Heart right ventricle (tissue), 16 donors: ENCODE measurements at regions of chr7 and their contacts with region 1.

Region 1: GRCh38 chr7:34823640-34824258 is 165.7 kb downstream of the NPSR1 start:
- DNase-seq: peak; percentile 15 to 20
- ATAC-seq: peak in 3 of 8 donors; percentile 46 to 47 (median 47)
- H3K4me3 ChIP-seq: no peak overlapping the region
- H3K27ac ChIP-seq: no peak overlapping the region
- H3K4me1 ChIP-seq: no peaks in the 10 kb centered on the region
- H3K27me3 ChIP-seq: peaks cover 0 to 4% (median 0%) of the 10 kb centered on the region in 7 donors
- CTCF ChIP-seq: peak; percentile 65 to 86 (median 85)

Region 2: DNA sequence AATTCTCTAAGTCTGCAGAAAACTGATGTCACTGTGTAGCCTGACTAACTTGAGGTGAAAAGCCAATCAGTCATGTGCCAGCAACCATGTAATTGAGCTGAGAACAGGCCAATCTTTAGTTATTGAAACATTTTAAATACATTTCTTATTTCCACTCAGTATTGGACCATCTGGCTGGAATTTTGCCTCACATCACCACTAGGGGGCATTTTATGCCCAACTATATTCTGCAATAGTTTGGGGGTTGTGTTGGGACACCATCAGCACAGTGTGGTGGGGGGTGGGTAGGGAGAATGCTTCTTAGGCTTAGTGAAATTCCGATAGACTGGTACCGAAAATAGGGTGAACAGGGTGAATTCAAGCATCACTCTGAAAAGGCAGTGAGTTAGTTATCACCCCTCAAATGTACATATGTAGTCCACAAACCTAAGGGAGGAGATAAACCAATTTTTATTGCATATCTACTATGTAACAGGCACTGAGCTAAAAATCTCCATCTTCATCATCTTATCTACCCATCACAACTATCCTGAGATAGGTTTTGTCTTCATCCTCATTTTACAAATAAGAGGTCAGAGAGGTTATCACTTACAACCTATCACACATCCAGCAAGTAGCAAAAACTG is 147.9 kb before region 1 on chr7:
- intact Hi-C with region 1: loop called in 1 of 10 experiments (anchors 5 kb)
- DNase-seq: no peak
- ATAC-seq: peak in 3 of 8 donors; percentile 41 to 58 (median 56)
- H3K4me3 ChIP-seq: no peak overlapping the region
- H3K27ac ChIP-seq: no peak overlapping the region
- H3K4me1 ChIP-seq: no peaks in the 10 kb centered on the region
- H3K27me3 ChIP-seq: no peaks in the 10 kb centered on the region
- CTCF ChIP-seq: peak; percentile 23 to 61 (median 55)

Region 3: GRCh38 chr7:34687529-34687928 is 136.2 kb before region 1 on chr7:
- intact Hi-C with region 1: no loop called
- DNase-seq: no peak
- ATAC-seq: no peak
- H3K4me3 ChIP-seq: no peak overlapping the region
- H3K27ac ChIP-seq: no peak overlapping the region
- H3K4me1 ChIP-seq: no peaks in the 10 kb centered on the region
- H3K27me3 ChIP-seq: no peaks in the 10 kb centered on the region
- CTCF ChIP-seq: no peak

Region 4: GRCh38 chr7:34966504-34967174 is 142.9 kb after region 1 on chr7:
- intact Hi-C with region 1: no loop called
- DNase-seq: no peak
- ATAC-seq: no peak
- H3K4me3 ChIP-seq: no peak overlapping the region
- H3K27ac ChIP-seq: no peak overlapping the region
- H3K4me1 ChIP-seq: no peaks in the 10 kb centered on the region
- H3K27me3 ChIP-seq: no peaks in the 10 kb centered on the region
- CTCF ChIP-seq: no peak

Region 5: DNA sequence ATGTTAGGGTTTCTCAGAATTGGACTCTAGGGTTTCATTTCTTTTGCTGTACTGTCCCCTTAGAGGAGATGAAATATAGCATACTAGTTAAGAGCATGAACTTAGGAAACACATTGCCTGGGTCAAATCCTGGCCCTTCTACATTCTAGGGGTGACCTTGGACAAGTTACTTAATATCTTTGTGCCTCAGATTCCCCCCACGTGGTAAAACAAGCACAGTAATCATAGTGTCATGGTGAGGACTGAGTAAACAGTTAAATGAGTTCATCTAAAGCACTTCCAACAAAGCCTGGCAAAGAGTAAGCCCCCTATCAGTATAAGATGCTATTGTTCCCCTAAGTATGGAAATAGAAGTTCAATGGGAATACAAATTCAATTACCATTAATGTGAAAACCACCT is 208.4 kb after region 1 on chr7:
- intact Hi-C with region 1: loop called in 8 of 10 experiments (anchors 5 to 10 kb)
- DNase-seq: no peak
- ATAC-seq: no peak
- H3K4me3 ChIP-seq: no peak overlapping the region
- H3K27ac ChIP-seq: no peak overlapping the region
- H3K4me1 ChIP-seq: peaks cover 0 to 28% (median 18%) of the 10 kb centered on the region in 9 donors
- H3K27me3 ChIP-seq: no peaks in the 10 kb centered on the region
- CTCF ChIP-seq: no peak

Region 6: DNA sequence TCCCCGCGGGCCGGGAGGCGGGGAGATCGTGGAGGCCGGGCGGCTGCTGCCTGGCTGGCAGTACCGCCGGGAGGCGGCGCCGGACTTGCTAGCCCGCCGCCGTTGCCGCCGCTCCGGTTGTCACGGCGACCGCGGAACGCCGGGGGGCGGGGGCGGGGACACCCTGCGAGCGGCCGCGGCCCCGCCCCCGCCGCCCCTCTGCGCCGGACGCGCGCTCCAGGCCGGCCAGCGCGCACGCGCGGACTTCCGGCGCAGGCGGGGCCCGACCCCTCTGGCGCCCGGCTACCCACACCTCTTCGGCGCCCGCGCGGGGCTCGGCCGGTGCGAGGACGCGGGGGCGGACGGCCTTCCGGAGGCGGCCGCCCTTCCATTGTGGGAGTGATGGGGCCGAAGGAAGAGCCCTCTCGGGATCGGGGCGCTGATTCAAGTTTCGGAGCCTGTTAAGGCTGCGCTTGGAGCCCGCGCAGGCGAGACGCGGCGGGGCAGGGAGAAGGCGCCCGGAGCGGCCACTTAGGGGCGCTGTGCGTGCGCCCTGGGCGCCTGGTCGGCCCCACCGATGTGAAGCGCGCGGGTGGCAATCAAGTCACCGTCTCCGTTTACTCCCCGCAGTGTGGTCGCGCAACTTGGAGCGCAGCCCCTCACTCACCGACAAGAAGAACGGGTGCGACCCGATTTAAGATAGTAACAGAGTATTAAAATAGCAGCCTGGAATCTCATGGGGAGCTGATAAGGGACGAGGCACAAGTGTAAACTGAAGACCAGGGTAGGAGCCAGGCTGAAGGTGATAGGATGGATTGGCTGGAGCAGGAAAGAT is 214.0 kb after region 1 on chr7:
- intact Hi-C with region 1: loop called in 8 of 10 experiments (anchors 5 to 10 kb)
- DNase-seq: peak; percentile 91 to 96
- ATAC-seq: peak; percentile 85 to 94 (median 90)
- H3K4me3 ChIP-seq: peak overlapping the region; percentile 23 to 86 (median 68)
- H3K27ac ChIP-seq: peak overlapping the region; percentile 70 to 93 (median 89)
- H3K4me1 ChIP-seq: peaks cover 0 to 34% (median 24%) of the 10 kb centered on the region in 9 donors
- H3K27me3 ChIP-seq: no peaks in the 10 kb centered on the region
- CTCF ChIP-seq: peak; percentile 73 to 97 (median 83)

Region 7: DNA sequence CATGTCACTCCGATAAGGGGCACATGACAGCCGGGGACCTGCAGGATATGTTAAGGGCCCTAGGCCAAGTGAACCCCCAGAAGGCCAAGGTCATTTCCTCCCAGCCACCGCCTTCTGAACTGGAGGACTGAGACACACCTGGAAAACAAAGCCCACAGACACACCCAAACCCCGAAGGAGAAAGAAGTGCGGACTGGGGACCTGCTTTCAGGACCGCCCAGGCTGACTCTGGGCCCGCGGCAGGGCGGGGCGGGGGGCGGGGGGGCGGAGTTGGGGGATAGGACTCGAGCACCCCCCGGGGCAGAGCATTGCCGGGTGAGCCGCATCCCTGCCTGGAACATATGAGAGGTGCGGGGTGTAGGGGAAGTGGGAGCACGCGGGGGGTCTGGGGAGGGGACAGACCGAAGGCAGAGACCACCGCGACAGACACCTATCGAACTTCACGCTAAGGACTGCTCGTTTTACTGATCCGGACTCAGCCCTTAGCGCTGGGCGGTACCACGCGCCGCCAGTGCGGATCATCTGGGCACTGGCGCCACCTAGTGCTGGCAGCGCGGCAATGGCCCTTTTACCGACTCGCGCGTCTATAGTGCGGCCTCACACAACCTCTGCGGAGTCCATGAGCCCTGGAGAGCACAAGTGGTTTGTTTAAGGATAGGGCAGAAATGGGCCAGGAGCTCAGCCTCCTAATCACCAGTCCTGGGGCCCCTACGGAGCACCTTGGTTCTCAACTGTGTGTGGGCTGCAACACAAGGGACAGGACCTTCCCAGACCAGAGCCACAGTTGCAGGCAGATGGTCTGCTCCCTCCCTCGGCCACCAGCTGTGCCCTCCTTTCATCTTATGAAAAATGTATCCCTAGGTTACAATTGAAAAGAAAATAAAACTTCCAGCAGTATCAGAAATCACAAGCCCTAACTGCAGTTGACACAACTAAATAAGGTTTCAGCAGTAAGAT is 713.6 kb after region 1 on chr7:
- intact Hi-C with region 1: loop called in 1 of 10 experiments (anchors 10 kb)
- DNase-seq: peak; percentile 75 to 84
- ATAC-seq: peak; percentile 96 to 98 (median 97)
- H3K4me3 ChIP-seq: peak overlapping the region in 9 of 10 donors; percentile 33 to 55 (median 51)
- H3K27ac ChIP-seq: no peak overlapping the region
- H3K4me1 ChIP-seq: peaks cover 0 to 12% (median 7%) of the 10 kb centered on the region in 9 donors
- H3K27me3 ChIP-seq: peaks cover 0 to 8% (median 4%) of the 10 kb centered on the region in 7 donors
- CTCF ChIP-seq: peak; percentile 81 to 97 (median 94)

Region 8: DNA sequence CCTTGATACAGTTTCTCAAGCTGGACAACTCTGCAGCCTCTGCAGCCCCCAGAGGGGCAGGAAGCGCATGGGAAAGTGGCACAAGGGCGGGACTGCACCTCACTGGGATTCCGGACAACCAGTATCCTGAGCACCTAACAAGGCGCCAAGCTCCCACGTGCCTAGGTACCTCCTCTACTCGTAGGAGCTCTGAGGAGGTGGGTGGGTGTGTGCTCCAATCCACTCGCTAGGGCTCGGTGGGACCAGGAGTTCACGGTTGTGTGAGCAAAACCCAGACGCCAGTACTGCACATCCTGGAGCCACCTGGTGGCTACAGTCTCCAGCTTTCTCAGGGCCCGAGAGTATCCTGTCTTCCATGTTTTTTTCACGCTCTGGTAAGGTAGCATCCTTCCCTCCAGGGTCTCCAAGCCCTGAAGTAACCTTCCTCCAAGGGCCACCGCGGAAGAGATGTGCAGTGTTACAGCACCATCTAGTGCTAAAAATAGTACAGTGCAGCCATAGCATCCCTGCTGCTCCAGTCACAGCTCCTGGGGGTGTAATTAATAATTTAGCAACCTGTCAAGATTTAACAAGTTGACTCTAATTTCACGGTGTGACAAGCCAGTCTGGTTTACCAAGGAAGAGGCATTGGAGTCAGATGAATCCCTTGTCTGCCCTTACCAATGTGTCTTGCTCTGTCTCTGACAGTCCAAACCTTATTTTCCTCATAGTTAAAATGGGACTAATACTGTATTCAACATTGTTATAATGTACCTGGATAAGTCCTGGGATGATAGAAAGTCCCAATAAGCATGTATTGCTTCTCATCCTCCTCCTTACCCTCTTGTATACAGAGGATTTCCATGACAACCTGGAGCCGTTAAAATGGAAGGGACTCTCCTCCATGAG is 800.8 kb after region 1 on chr7:
- intact Hi-C with region 1: loop called in 1 of 10 experiments (anchors 10 kb)
- DNase-seq: peak; percentile 10 to 18
- ATAC-seq: peak; percentile 68 to 88 (median 86)
- H3K4me3 ChIP-seq: no peak overlapping the region
- H3K27ac ChIP-seq: no peak overlapping the region
- H3K4me1 ChIP-seq: peaks cover 0 to 8% (median 6%) of the 10 kb centered on the region in 9 donors
- H3K27me3 ChIP-seq: no peaks in the 10 kb centered on the region
- CTCF ChIP-seq: peak; percentile 72 to 89 (median 86)

Region 9: GRCh38 chr7:36071605-36072004 is 1247.9 kb after region 1 on chr7:
- intact Hi-C with region 1: no loop called
- DNase-seq: no peak
- ATAC-seq: no peak
- H3K4me3 ChIP-seq: no peak overlapping the region
- H3K27ac ChIP-seq: no peak overlapping the region
- H3K4me1 ChIP-seq: peaks cover 0 to 23% (median 10%) of the 10 kb centered on the region in 9 donors
- H3K27me3 ChIP-seq: peaks cover 0 to 3% (median 0%) of the 10 kb centered on the region in 7 donors
- CTCF ChIP-seq: no peak